Gastrocnemius medialis (tissue), 4 donors: ENCODE measurements at regions of chr10 and their contacts with region 1.

Region 1: DNA sequence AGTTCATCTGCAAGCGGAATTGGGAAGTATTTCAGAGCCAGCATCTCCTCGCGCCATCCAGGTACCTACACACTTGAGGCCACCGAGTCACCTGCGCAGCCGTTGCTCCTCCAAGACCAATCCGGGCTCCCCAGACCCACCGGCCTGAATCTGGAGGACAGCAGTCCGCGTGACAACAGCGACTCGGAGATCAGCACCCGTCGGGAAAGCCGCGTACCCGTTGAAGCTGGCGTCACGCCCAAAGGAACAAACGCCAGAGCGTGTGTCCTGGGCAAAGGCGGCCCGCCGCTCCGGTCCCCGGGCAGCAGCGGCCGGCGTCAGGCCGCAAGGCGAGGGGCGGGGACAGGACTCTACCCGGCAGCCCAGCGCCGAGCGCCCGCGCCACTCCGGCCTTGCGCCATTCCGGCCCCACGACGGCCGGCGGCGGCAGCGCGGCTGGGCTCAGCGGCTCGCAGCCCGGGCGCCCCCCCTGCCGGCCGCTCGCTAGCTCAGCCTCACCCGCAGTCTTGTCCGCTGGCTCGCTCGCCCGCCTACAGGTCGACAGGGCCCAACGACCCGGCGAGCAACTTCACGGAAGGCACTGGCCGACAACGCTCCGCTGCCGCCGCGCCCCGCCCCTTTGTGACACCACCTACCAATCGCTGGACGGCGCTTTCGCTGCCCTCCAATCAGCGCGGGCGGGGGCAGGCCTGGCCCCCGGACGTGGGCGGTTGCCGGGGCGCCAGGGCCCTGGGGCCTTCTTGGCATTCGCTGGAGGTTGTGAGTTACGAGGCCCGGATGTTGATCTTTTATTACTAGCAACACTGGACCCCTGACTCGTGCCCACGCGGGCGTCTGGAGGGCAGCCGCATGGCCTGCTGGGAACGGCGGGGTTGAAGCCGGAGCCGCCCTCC is at the start of gene ZFAND4:
- DNase-seq: peak; percentile 95 to 97
- ATAC-seq: peak; percentile 96 to 97
- H3K4me3 ChIP-seq: peak within 1 kb of the TSS; percentile 76 to 91 (median 84)
- H3K27ac ChIP-seq: peak within 1 kb of the TSS; percentile 85 to 90 (median 88)
- H3K4me1 ChIP-seq: peaks cover 6 to 10% of the 10 kb centered on the region in 2 donors
- H3K27me3 ChIP-seq: no peaks in the 10 kb centered on the region
- CTCF ChIP-seq: peak; percentile 55 to 88 (median 85)
- POLR2A ChIP-seq: peak; percentile 68 to 83
- total RNA-seq, gene ZFAND4: 6.4 to 15.0 (median 12.3) TPM

Region 2: GRCh38 chr10:45008524-45009161 is 663.8 kb before region 1 on chr10:
- in situ Hi-C with region 1: no loop called
- intact Hi-C with region 1: loop called (anchors 10 kb)
- DNase-seq: no peak
- ATAC-seq: peak; percentile 85 to 89
- H3K4me3 ChIP-seq: no peak overlapping the region
- H3K27ac ChIP-seq: no peak overlapping the region
- H3K4me1 ChIP-seq: peaks cover 0 to 5% of the 10 kb centered on the region in 2 donors
- H3K27me3 ChIP-seq: no peaks in the 10 kb centered on the region
- CTCF ChIP-seq: peak; percentile 55 to 80 (median 73)
- POLR2A ChIP-seq: no peak

Region 3: GRCh38 chr10:45464958-45465567 is 207.4 kb before region 1 on chr10:
- in situ Hi-C with region 1: loop called in 1 of 4 experiments (anchors 25 kb)
- intact Hi-C with region 1: loop called (anchors 1 kb)
- DNase-seq: peak in 1 of 2 donors; percentile 50
- ATAC-seq: peak; percentile 56 to 88
- H3K4me3 ChIP-seq: no peak overlapping the region
- H3K27ac ChIP-seq: no peak overlapping the region
- H3K4me1 ChIP-seq: peaks cover 3 to 5% of the 10 kb centered on the region in 2 donors
- H3K27me3 ChIP-seq: no peaks in the 10 kb centered on the region
- CTCF ChIP-seq: peak; percentile 72 to 89 (median 79)
- POLR2A ChIP-seq: no peak

Region 4: DNA sequence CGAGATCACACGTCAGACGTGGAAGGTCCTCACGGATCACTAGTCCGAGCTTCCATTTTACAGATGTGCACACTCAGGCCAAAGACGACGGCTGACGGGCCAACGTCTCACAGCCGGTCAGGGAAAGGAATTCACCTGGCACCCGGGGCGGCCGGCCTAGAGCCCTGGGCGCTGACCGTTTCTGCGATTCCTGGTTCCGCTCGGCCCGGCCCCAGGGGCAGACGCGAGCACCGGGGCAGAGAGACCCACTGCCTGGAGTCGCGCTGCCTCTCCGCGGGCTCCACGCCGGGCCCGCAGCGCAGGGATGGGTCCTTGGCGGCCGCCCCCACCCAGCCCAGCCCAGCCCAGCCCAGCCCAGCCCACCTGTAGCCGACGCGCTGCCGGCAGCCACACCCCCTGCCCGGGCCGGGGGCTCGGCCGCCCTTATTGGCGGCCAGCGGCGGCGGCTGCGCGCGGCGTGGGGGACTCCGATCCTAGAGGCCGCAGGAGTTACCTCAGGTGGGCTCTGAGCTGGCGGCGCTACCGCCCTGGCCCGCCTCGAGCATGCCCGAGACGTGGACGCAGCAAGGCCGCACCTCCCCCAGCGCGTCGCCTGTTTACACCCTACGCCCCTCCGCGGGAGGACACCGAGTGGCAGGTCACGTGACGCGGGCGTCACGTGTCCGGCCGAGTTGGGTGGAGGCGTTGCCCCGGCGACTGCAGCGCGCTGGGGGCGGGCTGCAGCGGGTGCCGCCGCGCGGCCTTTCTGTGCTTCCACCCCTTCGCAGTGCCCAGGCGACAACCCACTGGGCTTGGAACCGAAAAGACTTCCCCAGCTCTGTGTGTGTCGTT is 77.9 kb before region 1 on chr10:
- in situ Hi-C with region 1: no loop called
- intact Hi-C with region 1: loop called (anchors 5 kb)
- DNase-seq: peak; percentile 85 to 89
- ATAC-seq: peak; percentile 87 to 94
- H3K4me3 ChIP-seq: peak overlapping the region; percentile 80 to 83 (median 82)
- H3K27ac ChIP-seq: peak overlapping the region; percentile 69 to 88 (median 74)
- H3K4me1 ChIP-seq: peaks cover 21 to 22% of the 10 kb centered on the region in 2 donors
- H3K27me3 ChIP-seq: peaks cover 1 to 4% (median 2%) of the 10 kb centered on the region in 3 donors
- CTCF ChIP-seq: peak in 2 of 5 experiments; percentile 39 to 52
- POLR2A ChIP-seq: peak; percentile 28 to 77

Region 5: DNA sequence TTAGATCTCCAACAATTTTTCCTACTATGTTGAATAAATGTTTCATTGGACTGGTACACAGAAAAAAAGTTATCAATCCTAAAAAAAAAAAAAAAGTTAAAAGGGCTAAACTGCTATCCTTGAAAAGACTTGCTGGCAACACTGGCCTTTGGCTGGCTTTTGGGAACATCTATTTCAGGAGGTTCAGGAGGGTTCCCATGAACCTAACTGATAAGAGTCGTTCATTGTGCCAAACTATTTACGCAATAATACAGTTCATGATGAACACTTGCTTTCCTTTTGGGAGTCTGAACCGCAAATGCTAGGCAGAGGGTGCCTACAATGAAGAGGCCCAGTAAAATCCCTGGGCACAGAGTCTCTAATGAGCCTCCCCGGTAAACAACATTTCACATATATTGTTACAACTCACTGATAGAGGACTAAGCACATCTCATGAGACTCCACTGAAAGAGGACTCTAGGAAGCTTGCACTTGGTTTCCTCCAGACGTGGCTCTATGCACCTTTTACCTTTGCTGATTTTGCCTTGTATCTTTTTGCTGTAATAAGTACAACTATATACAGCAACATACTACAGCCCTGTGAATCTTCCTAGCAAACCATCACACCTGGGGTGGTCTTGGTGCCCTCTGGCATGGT is 44.9 kb before region 1 on chr10:
- in situ Hi-C with region 1: no loop called
- intact Hi-C with region 1: loop called (anchors 5 kb)
- DNase-seq: peak in 1 of 2 donors; percentile 3
- ATAC-seq: peak; percentile 65 to 70
- H3K4me3 ChIP-seq: peak overlapping the region in 1 of 4 donors; percentile 5
- H3K27ac ChIP-seq: peak overlapping the region; percentile 49 to 81 (median 68)
- H3K4me1 ChIP-seq: peaks cover 19 to 24% of the 10 kb centered on the region in 2 donors
- H3K27me3 ChIP-seq: no peaks in the 10 kb centered on the region
- CTCF ChIP-seq: no peak
- POLR2A ChIP-seq: no peak